ENCODE measurements at regions of chr11 and their contacts with region 1.

Region 1: DNA sequence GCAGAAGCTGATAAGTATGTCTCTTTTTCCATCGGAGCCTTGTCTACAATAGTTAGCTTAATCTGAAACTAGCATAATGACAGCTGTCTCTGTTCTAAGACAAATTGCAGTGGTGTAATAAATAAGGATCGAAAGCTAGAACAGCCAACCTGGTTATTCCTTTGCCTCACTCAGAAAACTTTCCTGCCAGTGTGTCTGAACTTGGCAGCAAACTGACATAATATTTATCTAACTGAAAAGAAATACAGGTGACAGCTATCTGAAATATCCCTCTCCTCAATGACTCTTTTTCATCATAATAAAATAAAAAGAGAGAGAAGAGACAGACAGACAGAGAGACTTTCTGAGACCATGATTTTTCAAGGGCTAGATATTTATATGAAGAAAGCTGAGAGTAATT is 642.5 kb downstream of the LRRC4C start:
- DNase-seq: no peak
- ATAC-seq: no peak
- H3K4me3 ChIP-seq: no peak overlapping the region
- H3K27ac ChIP-seq: no peak overlapping the region
- H3K4me1 ChIP-seq: no peaks in the 10 kb centered on the region
- H3K27me3 ChIP-seq: no peaks in the 10 kb centered on the region
- CTCF ChIP-seq: no peak

Region 2: DNA sequence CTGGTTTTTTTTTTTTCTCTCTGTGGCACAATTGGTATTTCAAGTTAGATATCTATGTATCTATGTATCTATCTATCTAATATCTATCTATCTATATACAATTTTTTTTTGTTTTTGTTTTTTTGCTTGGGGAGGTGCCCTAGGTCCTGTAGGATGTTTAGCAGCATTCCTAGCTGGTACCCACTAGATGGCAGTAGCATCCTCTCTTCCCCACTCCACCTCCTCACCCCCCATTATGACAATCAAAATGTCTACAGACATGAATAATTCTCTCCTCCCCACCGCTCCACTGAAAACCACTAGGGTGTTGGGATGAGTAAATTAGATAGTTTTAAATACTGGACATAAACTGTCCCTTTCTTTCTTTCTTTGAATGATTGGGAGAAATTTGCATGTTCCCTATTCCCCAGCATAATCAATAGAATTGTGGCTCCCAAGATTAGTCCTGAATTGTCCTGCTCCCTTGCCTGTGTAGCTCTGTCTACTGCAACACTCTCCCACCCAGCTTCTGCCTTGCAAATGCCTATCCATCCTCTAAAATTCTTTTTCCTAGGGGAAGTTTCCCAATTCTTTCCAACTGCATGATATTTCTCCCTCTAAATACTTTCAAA is 509.9 kb before region 1 on chr11:
- CTCF ChIA-PET with region 1: interaction called, 10 read pairs
- POLR2A ChIA-PET with region 1: no interaction called
- in situ Hi-C with region 1: no loop called
- intact Hi-C with region 1: no loop called
- DNase-seq: peak; percentile 27
- ATAC-seq: peak; percentile 88
- H3K4me3 ChIP-seq: no peak overlapping the region
- H3K27ac ChIP-seq: peak overlapping the region; percentile 18; the same call in 1 of the 2 replicates
- H3K4me1 ChIP-seq: no peaks in the 10 kb centered on the region
- H3K27me3 ChIP-seq: no peaks in the 10 kb centered on the region
- CTCF ChIP-seq: peak; percentile 80